ENCODE measurements at regions of chr1 and their contacts with region 1.

Region 1: GRCh38 chr1:115609021-115609420 is 32.7 kb upstream of the VANGL1 start:
- DNase-seq: no peak

Region 2: DNA sequence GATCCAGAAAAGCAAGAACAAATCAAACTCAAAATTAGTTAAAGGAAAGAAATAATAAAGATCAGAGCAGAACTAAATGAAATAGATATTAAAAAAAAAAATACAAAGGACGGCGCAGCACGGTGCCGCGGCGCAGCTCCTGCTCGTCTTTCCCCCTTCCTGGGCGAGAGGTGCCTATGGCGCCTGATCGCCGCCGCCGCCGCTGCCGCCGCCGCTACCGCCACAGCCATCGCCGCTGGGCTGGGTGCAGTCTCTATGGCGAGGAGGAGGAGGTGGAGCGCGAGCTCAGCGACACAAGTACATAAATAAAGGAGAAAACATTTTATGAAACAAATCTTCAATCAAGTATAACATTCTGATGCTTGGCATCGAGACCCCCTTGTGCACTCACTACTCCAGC is 44.8 kb before region 1 on chr1:
- intact Hi-C with region 1: no loop called
- DNase-seq: no peak

Region 3: GRCh38 chr1:115702959-115703358 is 93.9 kb after region 1 on chr1:
- intact Hi-C with region 1: loop called in 1 of 2 experiments (anchors 5 kb)
- DNase-seq: no peak

Region 4: GRCh38 chr1:115771847-115772457 is 162.9 kb after region 1 on chr1:
- intact Hi-C with region 1: loop called in 1 of 2 experiments (anchors 5 kb)
- DNase-seq: peak; percentile 88